Ovary (tissue), 10 donors: ENCODE measurements at regions of chr6 and their contacts with region 1.

Region 1: DNA sequence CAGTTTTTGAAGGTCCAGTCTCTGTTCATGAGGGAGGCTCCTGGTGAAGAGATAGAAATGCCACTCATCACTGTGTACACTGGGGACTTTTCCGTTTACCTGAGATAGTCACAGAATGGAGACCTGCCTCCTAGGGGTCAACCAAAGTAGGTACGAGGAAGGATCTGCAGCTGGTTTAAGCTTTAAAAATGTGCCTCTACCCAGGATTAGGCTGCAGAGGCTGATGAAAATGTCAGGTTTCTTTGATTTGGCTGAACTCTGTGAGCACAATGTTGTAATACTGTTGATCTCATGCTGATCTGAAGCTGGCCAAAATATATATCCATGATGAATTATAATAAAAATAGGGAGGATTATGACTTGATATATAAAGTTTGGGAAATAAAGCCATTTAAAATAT is 182.7 kb downstream of the ADAT2 start:
- DNase-seq: no peak
- H3K4me3 ChIP-seq: no peak overlapping the region
- H3K27ac ChIP-seq: no peak overlapping the region
- H3K4me1 ChIP-seq: peaks cover 7% of the 10 kb centered on the region
- H3K27me3 ChIP-seq: no peaks in the 10 kb centered on the region
- CTCF ChIP-seq: no peak
- EP300 ChIP-seq: no peak
- POLR2A ChIP-seq: no peak

Region 2: GRCh38 chr6:143247586-143247985 is 20.2 kb before region 1 on chr6:
- intact Hi-C with region 1: loop called in 1 of 4 experiments (anchors 1 kb)
- DNase-seq: no peak
- H3K4me3 ChIP-seq: no peak overlapping the region
- H3K27ac ChIP-seq: no peak overlapping the region
- H3K4me1 ChIP-seq: peaks cover 3% of the 10 kb centered on the region
- H3K27me3 ChIP-seq: no peaks in the 10 kb centered on the region
- CTCF ChIP-seq: no peak
- EP300 ChIP-seq: no peak
- POLR2A ChIP-seq: no peak